Activated CD8-positive, alpha-beta memory T cell treated with anti-CD3 and anti-CD28 coated beads, Interleukin-2, amount 10 ng/mL, durations not matched to agents 7 days and 5 days (primary cell): ENCODE measurements at regions of chr10 and their contacts with region 1.

Region 1: DNA sequence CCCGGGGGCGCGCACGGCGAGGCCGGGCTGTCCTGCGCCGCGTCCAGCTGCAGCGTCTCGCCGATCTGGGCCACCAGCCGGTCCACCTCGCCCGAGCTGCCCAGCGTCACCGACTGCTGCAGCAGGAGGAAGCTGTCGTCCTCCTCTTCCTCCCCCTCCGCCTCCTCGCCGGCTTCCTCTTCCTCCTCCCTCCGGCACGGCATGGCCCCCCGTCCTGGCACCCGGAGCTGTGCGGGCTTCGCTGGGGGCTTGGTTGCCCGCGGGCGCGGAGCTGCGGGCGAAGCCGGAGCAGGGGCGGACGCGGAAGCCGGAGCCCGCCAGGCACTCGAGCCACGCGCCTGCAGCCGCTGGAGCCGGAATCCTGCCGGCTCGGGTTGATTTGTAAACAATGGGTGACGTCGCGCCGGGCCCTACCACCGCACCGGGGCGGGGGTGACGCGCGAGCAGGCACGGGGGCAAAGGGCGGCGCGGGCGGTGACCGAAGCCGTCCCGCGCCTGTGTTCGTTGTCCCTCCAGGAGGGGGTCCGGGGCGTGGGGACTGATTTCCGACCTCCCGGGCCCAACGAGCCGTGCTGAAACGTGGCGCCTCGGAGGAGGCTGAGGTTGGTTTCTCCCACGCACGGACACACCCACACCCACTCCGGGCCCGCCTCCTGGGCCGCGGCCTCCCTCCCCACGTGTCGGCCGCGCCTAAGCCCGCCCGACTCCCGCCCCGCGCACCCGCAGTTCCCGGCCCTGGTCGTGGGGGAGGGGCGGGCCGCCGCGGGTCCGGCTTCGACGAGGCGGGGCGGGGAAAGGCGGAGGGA is at the start of gene FRAT2:
- DNase-seq: peak; percentile 89
- ATAC-seq: peak; percentile 89
- H3K4me3 Mint-ChIP-seq: peak within 1 kb of the TSS; percentile 77
- H3K27ac Mint-ChIP-seq: peak within 1 kb of the TSS; percentile 89
- H3K4me1 Mint-ChIP-seq: peaks cover 31% of the 10 kb centered on the region
- H3K27me3 Mint-ChIP-seq: peaks cover 23% of the 10 kb centered on the region
- total RNA-seq, gene FRAT2: 11.4 to 14.4 TPM

Region 2: DNA sequence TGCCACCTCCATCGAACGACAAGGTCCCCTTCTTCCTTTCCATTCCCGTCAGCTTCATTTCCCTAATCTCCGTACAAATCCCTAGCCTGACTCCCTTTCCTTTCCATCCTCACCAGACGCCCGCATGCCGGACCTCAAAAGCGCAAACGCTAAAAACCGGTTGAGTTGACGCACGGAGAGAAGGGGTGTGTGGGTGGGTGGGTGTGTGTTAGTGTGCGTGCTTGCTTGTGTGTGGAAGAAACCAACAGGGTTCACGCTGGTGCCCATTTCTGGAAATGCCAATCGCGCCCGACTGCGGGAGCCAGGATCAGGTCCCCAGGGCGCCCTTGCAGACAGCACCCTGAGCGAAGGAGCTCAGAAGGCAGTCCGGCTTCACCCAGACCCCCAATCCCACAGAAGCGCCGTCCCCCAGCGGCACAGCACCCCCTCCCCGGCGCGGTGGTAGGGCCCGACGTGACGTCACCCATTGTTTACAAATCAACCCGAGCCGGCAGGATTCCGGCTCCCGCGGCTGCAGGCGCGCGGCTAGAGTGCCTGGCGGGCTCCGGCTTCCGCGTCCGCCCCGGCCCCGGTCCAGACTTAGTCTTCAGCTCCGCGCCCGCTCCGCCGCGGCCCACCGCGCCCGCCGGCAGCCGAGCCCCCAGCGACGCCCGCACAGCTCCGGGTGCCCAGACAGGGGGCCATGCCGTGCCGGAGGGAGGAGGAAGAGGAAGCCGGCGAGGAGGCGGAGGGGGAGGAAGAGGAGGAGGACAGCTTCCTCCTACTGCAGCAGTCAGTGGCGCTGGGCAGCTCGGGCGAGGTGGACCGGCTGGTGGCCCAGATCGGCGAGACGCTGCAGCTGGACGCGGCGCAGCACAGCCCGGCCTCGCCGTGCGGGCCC is 15.6 kb before region 1 on chr10 and contains the start of gene FRAT1:
- CTCF ChIA-PET with region 1: interaction called, 35 read pairs
- DNase-seq: peak; percentile 91
- ATAC-seq: peak; percentile 79
- H3K4me3 Mint-ChIP-seq: peak within 1 kb of the TSS; percentile 82
- H3K27ac Mint-ChIP-seq: peak within 1 kb of the TSS; percentile 99
- H3K4me1 Mint-ChIP-seq: peaks cover 22% of the 10 kb centered on the region
- H3K27me3 Mint-ChIP-seq: no peaks in the 10 kb centered on the region
- total RNA-seq, gene FRAT1: 5.5 to 5.7 TPM